Activated CD4-positive, alpha-beta memory T cell treated with anti-CD3 and anti-CD28 coated beads, Interleukin-2, amount 10 ng/mL, durations not matched to agents 7 days and 5 days (primary cell): ENCODE measurements at regions of chr5 and their contacts with region 1.

Region 1: GRCh38 chr5:87267574-87268125 is at the start of gene RASA1:
- DNase-seq: peak; percentile 84
- H3K4me3 Mint-ChIP-seq: peak within 1 kb of the TSS; percentile 91
- H3K27ac Mint-ChIP-seq: peak within 1 kb of the TSS; percentile 90
- H3K4me1 Mint-ChIP-seq: peaks cover 36% of the 10 kb centered on the region
- H3K27me3 Mint-ChIP-seq: peaks cover 3% of the 10 kb centered on the region
- total RNA-seq, gene RASA1: 22.5 to 23.5 TPM

Region 2: GRCh38 chr5:87282269-87282668 is 14.6 kb after region 1 on chr5:
- CTCF ChIA-PET with region 1: interaction called, 16 read pairs
- POLR2A ChIA-PET with region 1: interaction called, 13 read pairs
- DNase-seq: no peak
- H3K4me3 Mint-ChIP-seq: peak overlapping the region; percentile 43
- H3K27ac Mint-ChIP-seq: peak overlapping the region; percentile 79
- H3K4me1 Mint-ChIP-seq: peaks cover 37% of the 10 kb centered on the region
- H3K27me3 Mint-ChIP-seq: no peaks in the 10 kb centered on the region

Region 3: GRCh38 chr5:87340716-87341115 is 73.1 kb after region 1 on chr5:
- CTCF ChIA-PET with region 1: no interaction called
- POLR2A ChIA-PET with region 1: interaction called, 12 read pairs
- DNase-seq: no peak
- H3K4me3 Mint-ChIP-seq: peak overlapping the region; percentile 31
- H3K27ac Mint-ChIP-seq: peak overlapping the region; percentile 87
- H3K4me1 Mint-ChIP-seq: peaks cover 22% of the 10 kb centered on the region
- H3K27me3 Mint-ChIP-seq: no peaks in the 10 kb centered on the region

Region 4: DNA sequence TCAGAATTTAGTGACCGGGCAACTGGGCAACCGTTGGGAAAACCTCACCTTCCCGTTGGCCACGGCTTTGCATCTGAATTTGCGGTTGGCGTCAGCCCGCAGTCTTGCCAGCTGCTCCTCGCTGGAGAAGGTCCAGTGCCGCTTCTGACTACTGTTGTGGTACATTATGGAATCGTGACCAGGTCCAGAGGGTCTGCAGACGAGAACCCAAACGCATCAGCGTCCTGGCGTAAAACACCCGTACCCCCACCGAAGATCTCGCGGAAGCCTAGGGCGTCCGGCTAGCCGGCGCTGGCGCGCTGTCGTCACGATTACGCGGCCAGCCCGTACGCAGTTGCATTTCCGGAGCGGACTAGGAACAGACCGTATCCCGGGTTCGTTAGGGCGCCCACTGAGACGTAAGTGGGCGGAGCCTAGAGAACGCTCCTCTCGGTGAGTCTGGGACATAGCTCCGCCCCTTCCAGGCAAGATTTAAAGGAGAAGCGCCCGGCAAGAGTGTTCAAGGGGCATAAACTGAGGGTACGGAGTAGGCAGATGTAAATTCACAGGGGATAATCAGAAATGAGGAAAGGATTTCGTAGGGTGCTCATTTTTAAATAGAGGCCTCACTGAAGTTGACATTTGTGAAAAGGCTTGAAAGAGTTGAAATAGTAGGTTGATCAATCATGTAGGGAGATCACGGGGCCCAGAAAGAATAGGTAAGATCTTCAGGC is 145.1 kb after region 1 on chr5 and contains the start of gene CCNH:
- CTCF ChIA-PET with region 1: no interaction called
- POLR2A ChIA-PET with region 1: interaction called, 10 read pairs
- DNase-seq: peak; percentile 97
- H3K4me3 Mint-ChIP-seq: peak within 1 kb of the TSS; percentile 99
- H3K27ac Mint-ChIP-seq: peak within 1 kb of the TSS; percentile 91
- H3K4me1 Mint-ChIP-seq: peaks cover 40% of the 10 kb centered on the region
- H3K27me3 Mint-ChIP-seq: no peaks in the 10 kb centered on the region
- total RNA-seq, gene CCNH: 55.7 to 60.4 TPM